Esophagus muscularis mucosa (tissue), 4 donors: ENCODE measurements at regions of chrX and their contacts with region 1.

Region 1: GRCh38 chrX:46796574-46797191 is 37.8 kb upstream of the SLC9A7 start:
- DNase-seq: peak; percentile 92
- H3K4me3 ChIP-seq: no peak overlapping the region
- H3K27ac ChIP-seq: no peak overlapping the region
- H3K4me1 ChIP-seq: no peaks in the 10 kb centered on the region
- H3K27me3 ChIP-seq: no peaks in the 10 kb centered on the region
- CTCF ChIP-seq: peak; percentile 66 to 77 (median 67)
- EP300 ChIP-seq: no peak
- POLR2A ChIP-seq: no peak

Region 2: DNA sequence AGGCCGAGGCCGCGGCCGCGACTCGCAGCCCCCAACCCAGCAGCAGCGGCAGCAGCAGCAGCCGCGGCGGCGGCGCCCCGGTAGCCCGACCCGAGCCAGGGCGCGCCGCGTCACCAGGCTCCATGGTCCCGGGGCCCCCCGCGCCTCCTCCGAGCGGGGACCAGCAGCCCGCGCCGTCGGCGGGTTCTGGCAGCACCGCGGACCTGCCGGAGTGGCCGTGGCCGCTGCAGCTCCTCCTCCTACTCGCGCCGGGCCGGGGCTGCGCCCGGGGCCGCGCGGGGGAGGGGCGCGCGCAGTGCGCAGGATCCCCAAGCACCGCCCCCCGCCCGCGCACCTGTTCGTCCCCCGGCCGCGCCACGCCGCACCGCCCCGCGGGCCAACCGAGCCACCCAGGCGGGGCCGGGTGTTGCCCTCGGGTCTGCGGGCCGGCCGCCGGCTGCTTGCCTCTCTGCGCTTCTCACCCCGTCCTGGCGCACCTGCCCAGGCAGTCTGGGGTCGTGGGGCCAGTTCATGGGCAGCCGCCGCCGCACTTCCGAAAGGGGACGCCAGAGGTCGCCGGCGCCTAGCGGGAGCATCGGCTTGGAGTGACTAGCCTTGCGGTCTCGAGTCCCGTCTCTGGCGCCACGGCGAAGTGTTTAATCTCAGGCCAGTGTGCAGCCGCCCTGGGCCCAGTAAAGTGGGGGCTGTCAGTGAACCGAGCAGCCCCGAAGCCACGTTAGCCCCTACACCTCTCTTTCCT is 37.6 kb before region 1 on chrX and contains the start of gene SLC9A7:
- intact Hi-C with region 1: loop called (anchors 5 kb)
- DNase-seq: no peak
- H3K4me3 ChIP-seq: peak within 1 kb of the TSS; percentile 55 to 62 (median 57)
- H3K27ac ChIP-seq: peak within 1 kb of the TSS in 3 of 4 donors; percentile 33 to 48 (median 38)
- H3K4me1 ChIP-seq: peaks cover 4 to 15% (median 7%) of the 10 kb centered on the region in 4 donors
- H3K27me3 ChIP-seq: no peaks in the 10 kb centered on the region
- CTCF ChIP-seq: peak; percentile 72 to 86 (median 73)
- EP300 ChIP-seq: no peak
- POLR2A ChIP-seq: no peak
- total RNA-seq, gene SLC9A7: 2.8 to 10.7 (median 3.3) TPM